ENCODE measurements at regions of chr1 and their contacts with region 1.

Region 1: DNA sequence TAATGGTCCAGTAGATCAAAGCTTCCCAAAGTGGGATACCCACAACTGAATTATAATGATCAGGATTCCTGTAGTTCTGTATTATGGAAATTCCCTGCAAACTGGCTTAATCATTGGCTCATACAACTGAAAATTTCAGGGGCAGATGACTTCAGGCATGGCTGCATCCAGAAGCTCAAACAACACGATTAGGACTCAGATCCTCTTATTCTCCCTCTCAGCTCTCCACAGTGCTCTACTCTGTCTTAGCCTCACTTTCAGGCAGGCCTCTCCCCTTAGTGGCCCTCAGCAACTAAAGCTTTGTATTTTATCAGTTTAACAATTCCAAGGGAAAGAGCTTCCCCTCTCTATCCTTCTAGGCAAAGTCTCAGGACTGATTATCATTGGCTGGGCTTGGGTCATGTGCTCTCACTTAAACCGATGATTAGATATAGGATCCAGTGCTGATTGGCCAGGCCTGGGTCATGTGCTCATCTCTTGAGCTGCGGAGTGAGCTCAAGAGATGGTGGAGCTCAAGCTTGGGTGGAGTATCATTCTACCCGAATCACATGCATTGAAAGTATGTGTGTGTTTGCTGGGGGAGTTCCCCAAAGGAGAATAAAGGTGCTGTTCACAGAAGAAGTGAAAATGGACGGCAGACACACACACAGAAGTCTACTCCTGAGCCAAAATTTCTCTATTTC is 57.9 kb upstream of the RUNX3 start:
- DNase-seq: no peak
- H3K4me3 ChIP-seq: no peak overlapping the region
- H3K27ac ChIP-seq: no peak overlapping the region
- H3K4me1 ChIP-seq: no peaks in the 10 kb centered on the region
- H3K27me3 ChIP-seq: no peaks in the 10 kb centered on the region
- CTCF ChIP-seq: no peak

Region 2: DNA sequence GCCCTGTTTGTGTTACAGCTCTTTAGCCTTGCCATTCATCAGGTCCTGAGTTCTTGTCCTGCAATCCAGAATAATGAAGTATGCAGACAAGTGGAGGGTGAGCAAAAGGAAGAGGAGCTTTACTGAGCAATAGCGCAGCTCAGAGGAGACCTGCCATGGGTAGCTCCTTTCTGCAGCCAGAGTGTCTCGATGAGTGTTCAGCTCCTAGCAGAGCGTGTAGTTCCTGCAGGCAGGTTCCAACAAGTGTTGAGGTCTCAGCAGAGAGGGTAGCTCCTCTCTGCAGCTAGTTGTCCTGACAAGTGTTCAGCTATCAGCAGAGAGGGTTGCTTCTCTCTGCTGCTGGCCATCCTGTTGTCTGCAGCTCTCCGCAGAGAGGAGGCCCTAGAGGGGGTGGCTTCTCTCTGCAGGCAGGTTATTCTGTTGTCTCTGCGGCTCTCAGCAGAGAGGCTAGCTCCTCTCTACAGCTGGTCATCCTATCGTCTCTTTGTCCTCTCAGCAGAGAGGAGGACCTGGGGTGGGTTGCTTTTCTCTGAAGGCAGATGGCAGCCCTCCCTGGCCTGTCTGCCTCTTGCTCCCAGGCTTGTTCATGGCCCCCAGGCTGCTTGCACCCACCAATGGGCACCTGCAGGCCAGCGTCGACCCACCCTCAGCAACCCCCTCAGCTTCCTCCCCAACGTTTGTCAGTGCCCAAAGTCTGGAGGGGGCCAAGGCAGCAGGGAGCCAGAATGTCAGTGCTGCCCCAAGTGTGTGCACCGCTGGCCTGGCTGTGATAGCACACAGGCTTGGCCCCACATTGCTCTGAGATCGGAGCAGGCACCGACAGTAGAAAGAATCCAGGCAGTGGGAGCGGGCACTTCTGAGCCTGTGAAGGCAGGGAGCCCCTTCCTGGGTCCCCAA is 54.6 kb after region 1 on chr1:
- CTCF ChIA-PET with region 1: no interaction called
- dilution Hi-C with region 1: loop called (anchors 5 kb)
- in situ Hi-C with region 1: no loop called
- intact Hi-C with region 1: no loop called
- DNase-seq: peak; percentile 73
- H3K4me3 ChIP-seq: no peak overlapping the region
- H3K27ac ChIP-seq: no peak overlapping the region
- H3K4me1 ChIP-seq: peaks cover 11% of the 10 kb centered on the region
- H3K27me3 ChIP-seq: no peaks in the 10 kb centered on the region
- CTCF ChIP-seq: no peak

Region 3: DNA sequence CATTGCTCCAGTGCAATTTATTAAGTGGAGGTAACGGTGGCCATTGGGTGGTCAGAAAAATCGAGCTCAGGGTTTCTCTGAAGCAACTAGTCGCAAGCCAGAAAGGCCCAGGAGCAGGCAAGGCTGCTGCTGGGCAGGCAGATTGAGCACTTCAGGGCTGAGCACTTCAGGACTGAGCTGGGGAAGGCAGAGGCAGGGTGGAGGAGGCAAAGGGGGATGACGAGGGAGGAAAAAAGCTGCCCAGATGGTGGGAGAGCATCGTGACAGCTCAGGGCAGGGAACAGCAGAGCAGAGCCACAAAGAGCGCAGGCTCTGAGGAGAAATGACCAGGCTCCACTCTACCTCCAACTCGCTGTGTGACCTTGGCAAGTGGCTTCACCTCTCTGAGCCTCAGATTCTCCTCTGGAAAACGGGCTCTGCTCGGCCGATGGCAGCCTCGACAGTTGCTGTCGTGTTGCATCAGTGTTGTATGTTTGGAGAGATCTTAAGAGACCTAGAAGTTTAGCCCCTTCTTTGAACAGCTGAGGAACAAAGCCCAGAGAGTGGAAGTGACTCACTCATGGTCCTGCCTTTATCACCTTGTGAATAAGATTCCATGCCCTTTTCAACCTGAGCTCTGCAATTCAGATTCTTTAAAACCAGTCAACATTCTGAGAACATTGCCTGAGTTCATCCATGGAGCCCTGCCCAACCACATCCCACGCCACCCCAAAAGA is 102.8 kb after region 1 on chr1:
- CTCF ChIA-PET with region 1: no interaction called
- dilution Hi-C with region 1: loop called (anchors 5 kb)
- in situ Hi-C with region 1: no loop called
- intact Hi-C with region 1: no loop called
- DNase-seq: no peak
- H3K4me3 ChIP-seq: no peak overlapping the region
- H3K27ac ChIP-seq: no peak overlapping the region
- H3K4me1 ChIP-seq: peaks cover 3% of the 10 kb centered on the region
- H3K27me3 ChIP-seq: peaks cover 5% of the 10 kb centered on the region
- CTCF ChIP-seq: no peak

Measured in mammary epithelial cell (primary cell).